Heart right ventricle (tissue), 16 donors: ENCODE measurements at regions of chr15 and their contacts with region 1.

Region 1: DNA sequence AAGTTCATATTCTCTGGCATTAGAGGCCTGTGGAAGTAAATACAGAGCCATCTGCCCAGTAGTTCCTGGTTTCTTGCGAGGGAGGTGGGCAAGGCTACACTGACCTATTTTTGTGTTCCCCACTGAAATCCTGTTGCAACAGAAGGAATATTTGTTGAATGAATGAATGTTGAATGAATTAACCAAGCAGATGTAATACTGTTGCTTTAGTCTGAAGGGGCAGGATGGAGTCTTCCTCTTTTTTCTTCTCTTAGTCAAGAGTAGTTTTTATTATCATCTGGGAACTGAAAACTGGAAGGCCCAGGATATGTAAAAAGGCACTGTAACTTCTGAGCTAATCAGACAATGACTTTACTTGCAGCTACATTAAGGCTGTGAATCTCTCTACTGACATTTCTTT is 17.1 kb downstream of the BLOC1S6 start:
- DNase-seq: no peak
- ATAC-seq: peak in 2 of 8 donors; percentile 11 to 33
- H3K4me3 ChIP-seq: no peak overlapping the region
- H3K27ac ChIP-seq: peak overlapping the region in 1 of 10 donors; percentile 24
- H3K4me1 ChIP-seq: peaks cover 0 to 37% (median 0%) of the 10 kb centered on the region in 9 donors
- H3K27me3 ChIP-seq: no peaks in the 10 kb centered on the region
- CTCF ChIP-seq: no peak

Region 2: DNA sequence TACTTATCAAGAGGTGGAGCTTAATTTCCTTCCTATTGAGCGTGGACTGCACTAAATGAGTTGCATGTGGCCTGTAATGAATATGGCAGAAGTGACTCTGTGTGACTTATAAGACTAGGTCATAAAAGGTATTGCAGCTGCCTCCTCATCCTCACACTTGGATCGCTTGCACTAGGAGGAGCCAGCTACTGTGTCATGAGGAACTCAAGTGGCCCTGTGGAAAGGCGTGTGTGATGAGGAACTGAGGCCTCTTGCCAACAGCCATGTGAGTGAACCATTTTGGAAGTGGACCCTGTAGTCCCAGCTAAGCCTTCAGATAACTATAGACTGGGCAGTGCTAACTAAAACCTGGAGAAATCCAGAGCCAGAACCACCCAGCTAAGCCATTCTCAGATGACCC is 74.7 kb before region 1 on chr15:
- intact Hi-C with region 1: loop called in 1 of 10 experiments (anchors 10 kb)
- DNase-seq: peak in 1 of 2 donors; percentile 8
- ATAC-seq: peak in 5 of 8 donors; percentile 55 to 83 (median 68)
- H3K4me3 ChIP-seq: no peak overlapping the region
- H3K27ac ChIP-seq: no peak overlapping the region
- H3K4me1 ChIP-seq: no peaks in the 10 kb centered on the region
- H3K27me3 ChIP-seq: peaks cover 0 to 11% (median 0%) of the 10 kb centered on the region in 7 donors
- CTCF ChIP-seq: no peak

Region 3: DNA sequence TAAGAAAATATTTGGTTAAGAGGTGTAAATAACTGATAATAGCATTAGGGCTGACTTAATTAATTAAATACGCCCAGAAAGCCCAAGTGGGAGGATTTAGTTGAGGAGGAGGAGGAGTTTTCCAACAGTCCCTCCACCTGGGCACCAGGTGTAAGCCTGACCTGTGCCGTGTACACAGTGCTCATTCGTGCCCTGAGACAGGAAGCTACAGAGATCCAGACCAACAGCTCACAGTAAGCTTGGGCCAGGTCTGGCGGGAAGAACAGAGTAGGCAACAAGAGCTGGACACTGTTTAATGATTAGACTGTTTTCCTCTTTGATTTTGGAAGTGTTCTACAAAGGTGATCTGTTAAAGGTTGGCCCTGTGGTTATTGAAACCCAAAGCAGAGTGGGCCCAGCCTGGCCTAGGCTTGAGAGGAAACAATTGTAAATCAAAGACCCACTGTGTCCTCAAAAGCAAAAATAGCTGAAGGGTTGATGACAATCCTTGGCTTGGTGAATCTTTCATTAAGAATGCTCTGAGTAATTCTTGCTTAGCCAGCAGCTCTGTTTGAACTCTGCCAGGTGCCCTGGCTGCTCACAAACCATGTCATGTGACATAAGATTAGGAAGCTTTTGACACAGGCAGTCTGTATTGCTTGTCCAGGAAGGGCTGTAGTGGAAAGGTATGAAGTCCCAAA is 44.3 kb after region 1 on chr15:
- intact Hi-C with region 1: no loop called
- DNase-seq: no peak
- ATAC-seq: peak in 6 of 8 donors; percentile 47 to 79 (median 62)
- H3K4me3 ChIP-seq: no peak overlapping the region
- H3K27ac ChIP-seq: peak overlapping the region in 1 of 10 donors; percentile 27
- H3K4me1 ChIP-seq: peaks cover 0 to 70% (median 43%) of the 10 kb centered on the region in 9 donors
- H3K27me3 ChIP-seq: no peaks in the 10 kb centered on the region
- CTCF ChIP-seq: no peak